Right ventricle myocardium superior (tissue), 1 donor: ENCODE measurements at regions of chr13 and their contacts with region 1.

Region 1: GRCh38 chr13:76828316-76828741 is 57.9 kb downstream of the KCTD12 start:
- DNase-seq: no peak
- ATAC-seq: no peak

Region 2: DNA sequence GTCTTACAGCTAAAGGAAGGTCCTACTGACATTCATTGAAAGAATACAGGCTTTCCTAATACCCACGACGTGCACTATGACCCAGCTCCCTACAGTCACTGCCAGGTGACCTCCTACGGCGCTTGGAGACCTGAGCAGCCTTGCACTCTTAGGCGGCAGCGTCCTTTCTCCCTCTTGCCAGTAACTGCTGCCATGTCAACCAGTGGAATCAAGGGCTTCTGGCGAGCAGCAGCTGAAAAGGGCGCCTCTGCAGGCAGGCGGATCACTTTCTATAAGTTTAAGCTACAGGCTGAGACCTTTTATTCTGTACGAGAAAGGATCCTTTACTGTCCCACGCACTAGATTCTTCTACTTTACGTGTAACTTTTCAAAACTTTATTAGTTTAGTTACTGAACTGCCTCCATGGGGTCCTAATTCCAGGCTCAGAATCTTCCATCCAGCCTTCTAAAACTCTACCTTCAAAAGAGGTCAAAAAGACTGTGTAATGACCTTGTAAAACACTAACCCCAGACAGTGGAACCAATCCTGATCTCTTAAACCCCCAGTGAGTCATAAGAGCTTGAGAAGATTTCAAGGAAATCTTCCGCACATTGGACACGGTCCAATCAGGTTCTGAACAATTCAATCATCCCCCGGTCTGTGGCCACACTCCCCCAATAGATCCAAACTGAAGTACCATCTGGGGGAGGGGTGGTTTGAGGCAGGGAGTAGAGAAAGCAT is 56.0 kb after region 1 on chr13:
- intact Hi-C with region 1: loop called (anchors 5 kb)
- DNase-seq: peak; percentile 44
- ATAC-seq: no peak